ENCODE measurements at regions of chr1 and their contacts with region 1.

Region 1: GRCh38 chr1:110209715-110210603 is at the start of gene KCNC4:
- DNase-seq: peak; percentile 95
- H3K4me3 Mint-ChIP-seq: peak within 1 kb of the TSS; percentile 88
- H3K27ac Mint-ChIP-seq: peak within 1 kb of the TSS; percentile 84
- H3K4me1 Mint-ChIP-seq: peaks cover 47% of the 10 kb centered on the region
- H3K27me3 Mint-ChIP-seq: no peaks in the 10 kb centered on the region
- total RNA-seq, gene KCNC4: 15.0 to 15.1 TPM

Region 2: DNA sequence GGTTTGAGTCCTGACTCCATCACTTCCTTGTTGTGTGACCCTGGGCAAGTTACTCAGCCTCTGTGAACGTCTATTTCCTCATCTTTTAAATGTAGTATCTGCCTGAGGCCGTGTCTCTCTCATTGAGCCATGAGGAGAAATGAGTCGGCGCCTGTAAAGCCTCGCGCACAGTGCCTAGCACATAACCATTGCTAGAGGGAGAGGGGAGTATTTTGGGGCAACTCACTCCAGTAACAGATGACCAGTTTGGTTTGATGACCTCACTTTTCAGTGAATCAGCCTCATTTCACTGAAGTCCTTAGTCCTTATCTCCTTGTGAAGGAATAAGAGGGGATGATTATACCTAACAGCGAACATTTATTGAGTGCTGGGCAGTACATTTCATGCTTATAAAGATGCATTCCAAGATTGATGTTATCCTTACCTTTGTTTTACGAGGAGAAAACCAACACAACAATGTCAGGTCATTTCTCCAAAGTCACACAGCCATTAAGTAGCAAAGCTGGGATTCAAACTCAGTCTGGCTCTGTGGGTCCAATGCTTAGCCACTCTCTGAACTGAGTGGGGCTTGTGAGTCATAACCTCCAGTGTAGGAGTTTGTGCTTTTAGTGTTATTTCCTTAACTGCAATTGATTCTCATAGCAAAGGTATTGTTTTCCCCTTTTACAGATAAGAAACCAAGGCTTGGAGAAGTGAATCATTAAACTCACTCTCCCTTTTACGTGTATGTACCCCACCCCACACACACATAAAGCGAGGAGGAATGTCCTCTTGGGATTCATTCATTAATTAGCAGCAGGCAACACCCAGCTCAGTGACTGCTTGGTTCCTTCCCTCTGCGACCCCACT is 26.1 kb after region 1 on chr1:
- CTCF ChIA-PET with region 1: interaction called, 22 read pairs
- POLR2A ChIA-PET with region 1: interaction called, 14 read pairs
- intact Hi-C with region 1: loop called (anchors 1 kb)
- DNase-seq: peak; percentile 86
- H3K4me3 Mint-ChIP-seq: peak overlapping the region; percentile 22
- H3K27ac Mint-ChIP-seq: peak overlapping the region; percentile 97
- H3K4me1 Mint-ChIP-seq: peaks cover 56% of the 10 kb centered on the region
- H3K27me3 Mint-ChIP-seq: no peaks in the 10 kb centered on the region

Region 3: DNA sequence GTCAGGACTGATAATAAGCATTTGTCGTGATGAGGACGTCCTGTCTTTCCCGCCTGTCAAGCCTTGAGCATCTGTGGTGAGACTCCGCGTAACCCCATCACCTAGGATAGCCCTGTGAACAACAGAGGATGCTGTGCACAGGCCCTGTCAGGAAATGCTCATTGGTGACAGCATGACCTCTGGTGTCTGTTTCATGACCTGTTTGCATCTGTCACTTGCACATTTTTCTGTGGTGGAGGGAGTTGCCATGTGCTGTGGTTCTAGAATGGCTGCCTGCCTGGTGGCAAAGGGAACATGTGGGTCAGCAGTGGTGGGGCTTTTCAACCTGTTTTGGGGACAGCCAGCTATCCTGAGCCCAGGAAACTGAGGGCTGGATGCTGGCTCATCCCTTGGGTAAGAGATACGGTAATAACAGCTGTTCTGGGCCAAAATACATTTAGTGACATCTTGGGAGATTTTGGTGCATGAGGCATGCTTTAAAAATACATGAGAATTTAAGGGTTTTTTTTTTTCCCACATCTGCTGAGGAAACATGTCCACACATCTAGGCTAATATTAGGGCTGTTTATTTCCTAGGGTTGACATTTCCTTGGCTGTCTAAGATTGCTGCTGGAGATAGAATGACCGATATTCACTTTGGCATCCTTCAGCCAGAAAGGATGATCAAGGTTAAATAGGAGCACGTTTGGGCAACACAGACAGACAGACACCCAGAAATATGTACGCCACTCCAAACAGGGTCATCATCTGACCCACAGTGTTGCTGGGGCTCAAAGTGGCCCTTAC is 53.1 kb after region 1 on chr1:
- CTCF ChIA-PET with region 1: interaction called, 7 read pairs
- POLR2A ChIA-PET with region 1: no interaction called
- intact Hi-C with region 1: loop called (anchors 2 kb)
- DNase-seq: peak; percentile 32
- H3K4me3 Mint-ChIP-seq: no peak overlapping the region
- H3K27ac Mint-ChIP-seq: no peak overlapping the region
- H3K4me1 Mint-ChIP-seq: no peaks in the 10 kb centered on the region
- H3K27me3 Mint-ChIP-seq: peaks cover 3% of the 10 kb centered on the region

Region 4: DNA sequence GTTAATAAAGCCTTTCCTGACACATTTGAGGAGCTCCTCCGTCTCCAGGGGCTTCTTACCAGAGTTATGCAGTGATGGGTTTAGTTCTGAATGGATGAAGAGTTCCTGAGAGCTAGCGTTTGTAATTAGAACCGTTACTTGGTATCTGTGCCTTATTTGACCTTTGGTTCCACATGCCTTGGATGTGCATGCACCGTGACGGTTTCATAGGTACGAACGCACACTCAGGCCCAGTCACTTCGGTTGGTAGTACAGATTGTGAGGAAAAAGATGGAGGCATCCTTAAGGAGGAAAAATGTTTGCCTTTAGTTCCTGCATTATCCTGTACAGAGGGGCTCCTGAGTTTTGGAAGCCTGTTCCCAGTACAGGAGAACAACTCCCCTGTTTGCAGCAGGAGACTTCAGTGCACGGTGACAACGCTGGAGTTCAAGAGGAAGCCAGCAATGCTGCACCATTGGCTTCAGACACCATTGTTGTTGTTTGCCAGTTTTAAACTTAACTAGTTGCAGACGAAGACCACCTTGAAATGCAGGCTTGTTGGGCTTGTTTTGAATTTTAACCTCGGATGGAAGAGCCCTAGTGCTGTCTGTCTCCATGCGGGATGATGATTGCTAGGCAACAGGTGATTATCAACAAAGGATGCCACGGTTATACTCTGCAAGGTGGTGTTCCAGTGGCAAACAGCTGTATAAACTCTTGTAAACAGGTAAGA is 137.4 kb after region 1 on chr1:
- CTCF ChIA-PET with region 1: interaction called, 10 read pairs
- POLR2A ChIA-PET with region 1: no interaction called
- intact Hi-C with region 1: no loop called
- DNase-seq: no peak
- H3K4me3 Mint-ChIP-seq: no peak overlapping the region
- H3K27ac Mint-ChIP-seq: no peak overlapping the region
- H3K4me1 Mint-ChIP-seq: peaks cover 88% of the 10 kb centered on the region
- H3K27me3 Mint-ChIP-seq: no peaks in the 10 kb centered on the region

Region 5: DNA sequence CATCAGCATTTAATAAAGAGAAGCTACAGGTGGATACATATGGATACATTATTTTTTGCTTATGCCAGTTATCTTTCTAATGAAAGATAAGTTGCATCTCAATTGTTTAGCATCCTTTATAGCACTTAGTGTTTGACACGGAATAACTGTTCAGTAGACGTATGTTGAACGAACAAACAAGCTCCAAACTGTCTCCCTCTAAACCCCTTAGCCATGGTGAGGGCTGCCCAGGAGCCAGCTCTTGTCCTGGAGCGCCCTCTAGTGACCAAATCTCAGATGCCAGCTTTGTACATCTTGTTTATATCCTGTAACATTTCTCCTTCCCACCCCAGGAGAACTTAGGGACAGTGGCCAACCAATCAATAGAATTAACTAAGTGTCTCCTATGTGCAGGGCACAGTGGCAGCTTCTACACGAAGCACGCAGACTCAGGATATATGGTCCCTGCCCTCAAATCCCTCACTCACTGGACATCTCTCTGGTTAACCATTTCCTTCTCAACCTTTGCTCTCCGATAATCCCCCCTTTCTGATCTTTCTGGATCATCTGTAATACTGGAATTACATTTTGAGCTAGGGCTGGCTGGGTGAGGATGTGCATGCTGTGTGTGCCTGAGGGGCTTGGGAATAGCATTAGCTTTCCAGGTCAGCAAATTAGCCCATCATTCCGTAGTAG is 286.1 kb after region 1 on chr1:
- CTCF ChIA-PET with region 1: interaction called, 80 read pairs
- POLR2A ChIA-PET with region 1: no interaction called
- intact Hi-C with region 1: no loop called
- DNase-seq: peak; percentile 86
- H3K4me3 Mint-ChIP-seq: no peak overlapping the region
- H3K27ac Mint-ChIP-seq: no peak overlapping the region
- H3K4me1 Mint-ChIP-seq: no peaks in the 10 kb centered on the region
- H3K27me3 Mint-ChIP-seq: no peaks in the 10 kb centered on the region

Measured in activated CD4-positive, alpha-beta memory T cell treated with anti-CD3 and anti-CD28 coated beads for 36 hours (primary cell).